ENCODE measurements at regions of chr1 and their contacts with region 1.

Region 1: DNA sequence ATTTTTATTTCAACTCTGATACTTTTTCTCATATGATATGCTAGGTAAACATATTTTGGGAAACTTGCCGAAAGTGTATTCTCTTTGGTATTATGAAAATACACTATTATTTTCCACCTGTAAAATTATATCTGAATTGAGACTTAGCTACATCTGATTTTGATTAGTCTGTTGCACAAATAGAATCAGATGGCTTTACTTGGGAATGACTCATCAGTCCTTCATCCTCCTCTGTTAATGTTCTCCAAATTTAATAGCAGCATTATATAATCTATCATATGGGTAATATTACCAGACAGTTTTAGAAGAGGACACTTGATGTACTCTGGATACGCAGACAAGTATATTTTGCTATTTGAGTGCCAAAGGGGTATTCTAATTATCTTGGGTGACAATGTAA is 245.3 kb downstream of the CTH start:
- DNase-seq: no peak
- H3K4me3 Mint-ChIP-seq: no peak overlapping the region
- H3K27ac Mint-ChIP-seq: no peak overlapping the region
- H3K4me1 Mint-ChIP-seq: no peaks in the 10 kb centered on the region
- H3K27me3 Mint-ChIP-seq: no peaks in the 10 kb centered on the region
- CTCF ChIP-seq: no peak

Region 2: DNA sequence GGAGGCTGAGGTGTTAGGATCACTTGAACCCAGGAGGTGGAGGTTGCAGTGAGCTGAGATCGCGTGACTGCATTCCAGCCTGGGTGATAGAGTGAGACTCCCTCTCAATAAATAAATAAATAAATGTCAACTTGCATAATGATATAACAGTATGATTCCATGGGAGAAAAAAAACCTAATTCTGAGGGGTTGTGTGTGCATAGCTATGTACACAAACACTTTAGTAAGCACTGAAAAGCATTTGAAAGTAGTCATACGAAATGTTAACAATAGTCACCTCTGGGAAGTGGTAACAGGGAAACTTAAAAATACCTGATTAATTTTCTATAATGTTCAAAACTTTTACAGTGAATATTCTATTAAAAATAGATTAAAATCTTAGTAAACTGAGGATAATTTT is 345.0 kb before region 1 on chr1:
- CTCF ChIA-PET with region 1: no interaction called
- intact Hi-C with region 1: loop called (anchors 5 kb)
- DNase-seq: no peak
- H3K4me3 Mint-ChIP-seq: no peak overlapping the region
- H3K27ac Mint-ChIP-seq: no peak overlapping the region
- H3K4me1 Mint-ChIP-seq: no peaks in the 10 kb centered on the region
- H3K27me3 Mint-ChIP-seq: no peaks in the 10 kb centered on the region
- CTCF ChIP-seq: no peak

Region 3: DNA sequence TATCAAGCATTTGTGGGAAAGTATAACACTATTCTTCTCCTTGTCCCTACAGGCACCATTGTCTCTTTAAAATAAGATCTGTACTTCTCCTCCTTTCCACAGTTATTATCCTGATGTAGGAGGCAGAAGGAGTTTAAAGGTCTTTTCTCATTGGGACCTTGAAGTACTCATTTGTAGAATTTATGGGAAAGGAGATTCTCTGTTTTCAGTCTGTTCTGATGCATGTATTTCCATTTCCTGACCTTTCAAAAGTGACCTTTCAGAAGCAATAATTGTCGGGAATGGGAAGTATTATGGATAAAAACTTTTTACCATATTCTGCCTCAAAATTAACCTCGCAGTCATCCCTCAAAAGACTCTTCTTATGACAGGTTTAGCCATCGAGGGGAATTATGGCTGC is 20.5 kb before region 1 on chr1:
- CTCF ChIA-PET with region 1: no interaction called
- intact Hi-C with region 1: loop called (anchors 2 kb)
- DNase-seq: no peak
- H3K4me3 Mint-ChIP-seq: no peak overlapping the region
- H3K27ac Mint-ChIP-seq: no peak overlapping the region
- H3K4me1 Mint-ChIP-seq: no peaks in the 10 kb centered on the region
- H3K27me3 Mint-ChIP-seq: no peaks in the 10 kb centered on the region
- CTCF ChIP-seq: no peak

Region 4: GRCh38 chr1:70667494-70668170 is 11.3 kb after region 1 on chr1:
- CTCF ChIA-PET with region 1: no interaction called
- intact Hi-C with region 1: no loop called
- DNase-seq: no peak
- H3K4me3 Mint-ChIP-seq: no peak overlapping the region
- H3K27ac Mint-ChIP-seq: no peak overlapping the region
- H3K4me1 Mint-ChIP-seq: no peaks in the 10 kb centered on the region
- H3K27me3 Mint-ChIP-seq: no peaks in the 10 kb centered on the region
- CTCF ChIP-seq: no peak

Region 5: GRCh38 chr1:70685300-70686241 is 29.2 kb after region 1 on chr1:
- CTCF ChIA-PET with region 1: no interaction called
- intact Hi-C with region 1: no loop called
- DNase-seq: peak; percentile 61
- H3K4me3 Mint-ChIP-seq: no peak overlapping the region
- H3K27ac Mint-ChIP-seq: no peak overlapping the region
- H3K4me1 Mint-ChIP-seq: no peaks in the 10 kb centered on the region
- H3K27me3 Mint-ChIP-seq: no peaks in the 10 kb centered on the region
- CTCF ChIP-seq: peak; percentile 74

Region 6: DNA sequence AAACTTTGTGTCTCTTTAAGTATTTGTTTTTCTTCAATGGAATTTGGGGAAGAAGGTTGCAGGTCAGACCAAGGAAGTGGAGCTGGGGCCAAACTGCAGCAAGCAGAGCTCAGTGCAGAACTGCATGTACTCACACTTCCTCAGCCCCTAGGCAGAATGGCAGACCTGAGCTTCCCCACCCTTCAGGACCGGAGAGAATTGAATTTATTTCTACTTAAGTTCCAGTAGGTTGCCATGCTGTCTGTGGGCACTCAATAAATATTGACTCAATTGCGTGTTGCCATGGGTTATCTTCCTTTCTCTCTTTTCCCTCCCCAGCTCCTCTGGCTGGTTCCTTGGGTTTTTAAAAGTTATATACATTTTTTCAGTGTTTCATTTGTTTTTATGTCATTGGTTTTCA is 217.8 kb after region 1 on chr1:
- CTCF ChIA-PET with region 1: no interaction called
- intact Hi-C with region 1: no loop called
- DNase-seq: no peak
- H3K4me3 Mint-ChIP-seq: no peak overlapping the region
- H3K27ac Mint-ChIP-seq: no peak overlapping the region
- H3K4me1 Mint-ChIP-seq: no peaks in the 10 kb centered on the region
- H3K27me3 Mint-ChIP-seq: no peaks in the 10 kb centered on the region
- CTCF ChIP-seq: no peak

Measured in Calu3 (cell line).